ENCODE measurements at regions of chr10 and their contacts with region 1.

Region 1: GRCh38 chr10:6202684-6203330 is at the start of gene PFKFB3:
- DNase-seq: peak; percentile 96
- H3K4me3 Mint-ChIP-seq: peak within 1 kb of the TSS; percentile 90
- H3K27ac Mint-ChIP-seq: peak within 1 kb of the TSS; percentile 91
- H3K4me1 Mint-ChIP-seq: peaks cover 32% of the 10 kb centered on the region
- H3K27me3 Mint-ChIP-seq: no peaks in the 10 kb centered on the region
- total RNA-seq, gene PFKFB3: 70.6 to 76.4 TPM

Region 2: DNA sequence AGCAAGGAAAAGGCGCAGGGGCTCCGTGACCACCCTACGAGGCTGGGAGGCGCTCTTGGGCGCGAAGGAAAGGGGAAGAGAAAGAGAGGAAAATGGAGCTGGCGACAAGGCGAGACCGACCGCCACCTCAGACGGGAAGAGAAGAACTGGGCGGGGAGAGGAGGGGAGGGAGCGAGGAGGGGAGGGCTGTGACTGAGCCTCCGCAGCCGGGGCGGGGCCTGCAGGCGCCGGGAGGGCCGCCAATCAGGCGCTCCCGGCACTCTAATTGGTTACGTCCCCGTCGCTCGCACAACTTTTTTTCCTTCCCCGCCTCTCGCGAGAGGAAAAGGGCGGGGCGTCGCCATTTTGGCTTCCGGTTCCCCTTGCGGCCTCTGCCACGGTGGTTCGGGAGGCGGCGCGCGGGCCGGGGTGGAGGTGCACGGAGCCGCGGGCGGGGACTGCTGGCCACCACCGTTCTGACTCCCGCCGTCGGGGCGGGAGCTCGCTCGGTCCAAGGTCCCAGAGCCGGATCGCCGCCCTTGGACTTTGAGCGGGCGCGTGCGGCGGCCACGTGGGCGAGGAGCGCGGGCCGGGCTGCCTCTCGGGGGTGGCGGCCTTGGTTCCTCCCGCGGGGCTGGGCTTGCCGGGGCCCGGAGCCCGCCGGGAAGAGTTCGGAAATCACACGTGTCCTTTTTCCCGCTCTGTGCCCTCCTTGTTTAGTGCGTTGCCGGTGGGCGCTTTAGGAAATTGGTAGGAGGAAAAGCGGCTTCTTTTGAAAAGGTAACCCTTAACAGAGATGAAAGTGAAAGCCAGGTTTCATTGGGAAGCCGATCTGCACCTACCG is 389.3 kb before region 1 on chr10 and contains the start of gene GDI2:
- CTCF ChIA-PET with region 1: no interaction called
- POLR2A ChIA-PET with region 1: no interaction called
- intact Hi-C with region 1: loop called (anchors 5 kb)
- DNase-seq: peak; percentile 98
- H3K4me3 Mint-ChIP-seq: peak within 1 kb of the TSS; percentile 82
- H3K27ac Mint-ChIP-seq: peak within 1 kb of the TSS; percentile 95
- H3K4me1 Mint-ChIP-seq: peaks cover 60% of the 10 kb centered on the region
- H3K27me3 Mint-ChIP-seq: no peaks in the 10 kb centered on the region
- total RNA-seq, gene GDI2: 283 to 286 TPM

Region 3: DNA sequence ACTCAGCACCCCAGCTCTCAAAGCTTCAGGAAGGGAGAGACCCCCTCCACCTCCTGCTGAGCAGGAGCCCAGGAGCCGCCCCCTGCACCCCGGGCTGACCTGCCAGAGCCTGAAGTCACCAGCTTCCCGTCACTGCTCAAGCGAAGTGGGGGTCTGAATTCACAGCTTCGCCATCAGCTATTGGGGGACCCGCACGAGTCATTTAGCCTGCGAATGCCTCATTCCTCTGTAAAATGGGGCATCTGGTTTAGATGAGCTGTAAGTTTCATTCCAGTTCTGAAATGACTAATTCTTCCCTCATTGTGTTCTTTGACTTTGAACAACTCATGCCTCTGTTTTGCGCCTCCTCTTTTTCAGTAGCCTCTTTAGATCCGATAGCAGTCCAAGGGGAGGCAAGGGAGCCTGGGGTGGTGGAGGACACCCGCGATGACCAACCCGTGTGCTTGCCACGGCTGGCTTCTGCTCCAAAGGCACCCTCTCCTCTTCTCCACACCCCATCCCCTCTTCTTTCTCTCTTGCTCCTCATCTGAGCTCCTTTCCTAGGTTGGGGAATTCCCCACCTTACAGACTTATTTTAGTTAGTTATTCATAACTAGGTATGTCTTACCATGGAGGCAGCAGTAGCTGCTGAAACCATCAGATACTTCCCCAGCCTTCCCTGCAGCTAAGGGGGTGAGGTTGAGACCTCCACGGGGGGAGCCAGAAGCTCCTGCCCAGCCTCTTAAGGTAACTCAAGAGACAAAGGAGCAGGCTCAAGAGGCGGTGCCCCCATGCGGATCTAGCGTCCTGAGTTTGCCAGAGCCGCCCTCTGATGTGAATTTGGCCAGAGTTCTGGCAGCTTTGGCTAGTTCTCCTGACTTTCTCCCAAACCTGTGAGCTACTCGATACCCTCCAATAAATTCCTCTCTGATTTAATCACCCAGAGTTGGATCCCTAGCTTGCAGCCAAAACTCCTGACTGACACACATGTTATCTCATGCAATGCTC is 66.3 kb before region 1 on chr10:
- CTCF ChIA-PET with region 1: interaction called, 14 read pairs
- POLR2A ChIA-PET with region 1: interaction called, 7 read pairs
- intact Hi-C with region 1: no loop called
- DNase-seq: peak; percentile 88
- H3K4me3 Mint-ChIP-seq: peak overlapping the region; percentile 52
- H3K27ac Mint-ChIP-seq: peak overlapping the region; percentile 82
- H3K4me1 Mint-ChIP-seq: peaks cover 63% of the 10 kb centered on the region
- H3K27me3 Mint-ChIP-seq: peaks cover 10% of the 10 kb centered on the region

Region 4: DNA sequence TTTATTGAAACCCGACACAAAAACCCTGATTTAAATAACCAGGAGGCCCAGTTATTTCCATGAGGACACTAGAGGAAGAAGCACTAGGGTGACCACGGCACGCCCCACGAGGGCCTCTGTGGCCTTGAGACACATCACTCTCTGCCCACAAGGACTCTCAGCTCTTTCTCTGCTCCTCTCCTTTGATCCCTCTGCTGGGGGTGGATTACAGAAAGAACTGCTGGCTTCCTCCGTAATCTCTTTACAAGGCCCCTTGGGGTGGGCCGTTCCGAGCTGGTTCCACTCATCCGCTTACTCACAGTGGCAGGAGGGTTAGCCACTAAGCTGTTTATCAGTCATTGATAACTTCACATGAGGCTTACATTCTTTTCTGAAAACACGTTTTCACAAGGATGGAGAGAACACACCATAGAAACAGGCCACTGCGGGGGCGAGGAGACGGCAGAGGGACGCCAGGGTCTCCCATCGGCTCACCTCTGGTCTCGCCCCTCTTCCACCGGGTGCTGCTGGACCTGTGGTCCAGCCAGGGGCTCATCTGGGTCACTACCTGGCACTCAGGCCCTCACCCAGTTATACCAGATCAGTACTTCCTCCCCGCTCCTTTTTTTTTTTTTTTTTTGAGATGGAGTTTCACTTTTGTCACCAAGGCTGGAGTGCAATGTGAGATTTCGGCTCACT is 17.6 kb before region 1 on chr10:
- CTCF ChIA-PET with region 1: interaction called, 14 read pairs
- POLR2A ChIA-PET with region 1: interaction called, 7 read pairs
- intact Hi-C with region 1: loop called (anchors 2 kb)
- DNase-seq: peak; percentile 39
- H3K4me3 Mint-ChIP-seq: no peak overlapping the region
- H3K27ac Mint-ChIP-seq: peak overlapping the region; percentile 60
- H3K4me1 Mint-ChIP-seq: peaks cover 37% of the 10 kb centered on the region
- H3K27me3 Mint-ChIP-seq: no peaks in the 10 kb centered on the region

Region 5: GRCh38 chr10:6275022-6275997 is 72.5 kb after region 1 on chr10:
- CTCF ChIA-PET with region 1: interaction called, 9 read pairs
- POLR2A ChIA-PET with region 1: interaction called, 11 read pairs
- intact Hi-C with region 1: loop called (anchors 1 kb)
- DNase-seq: peak; percentile 97
- H3K4me3 Mint-ChIP-seq: peak overlapping the region; percentile 70
- H3K27ac Mint-ChIP-seq: peak overlapping the region; percentile 97
- H3K4me1 Mint-ChIP-seq: peaks cover 62% of the 10 kb centered on the region
- H3K27me3 Mint-ChIP-seq: no peaks in the 10 kb centered on the region

Region 6: DNA sequence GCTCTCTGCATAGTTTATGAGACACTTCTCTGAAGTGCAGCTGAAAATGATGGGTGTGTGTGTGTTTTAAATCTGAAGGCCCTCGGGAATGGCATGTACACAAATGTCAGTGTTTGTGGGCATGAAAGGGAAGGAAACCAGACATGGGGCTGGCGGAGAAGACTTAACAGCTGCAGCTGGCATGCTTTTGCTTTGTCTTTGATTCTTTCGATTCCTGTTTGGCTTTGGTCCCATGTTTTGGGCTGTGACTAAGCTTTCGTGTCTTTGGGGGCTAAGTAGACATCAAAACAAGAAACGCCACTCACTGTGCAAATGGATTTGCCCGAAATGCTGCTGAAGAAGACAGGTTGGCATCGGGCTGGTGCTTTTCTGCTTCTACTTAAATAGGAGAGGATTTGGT is 179.3 kb after region 1 on chr10:
- CTCF ChIA-PET with region 1: interaction called, 15 read pairs
- POLR2A ChIA-PET with region 1: no interaction called
- intact Hi-C with region 1: no loop called
- DNase-seq: peak; percentile 64
- H3K4me3 Mint-ChIP-seq: peak overlapping the region; percentile 47
- H3K27ac Mint-ChIP-seq: peak overlapping the region; percentile 77
- H3K4me1 Mint-ChIP-seq: peaks cover 29% of the 10 kb centered on the region
- H3K27me3 Mint-ChIP-seq: no peaks in the 10 kb centered on the region

Measured in activated CD4-positive, alpha-beta memory T cell treated with anti-CD3 and anti-CD28 coated beads for 36 hours (primary cell).